Heart left ventricle (tissue), 16 donors: ENCODE measurements at regions of chr2 and their contacts with region 1.

Region 1: DNA sequence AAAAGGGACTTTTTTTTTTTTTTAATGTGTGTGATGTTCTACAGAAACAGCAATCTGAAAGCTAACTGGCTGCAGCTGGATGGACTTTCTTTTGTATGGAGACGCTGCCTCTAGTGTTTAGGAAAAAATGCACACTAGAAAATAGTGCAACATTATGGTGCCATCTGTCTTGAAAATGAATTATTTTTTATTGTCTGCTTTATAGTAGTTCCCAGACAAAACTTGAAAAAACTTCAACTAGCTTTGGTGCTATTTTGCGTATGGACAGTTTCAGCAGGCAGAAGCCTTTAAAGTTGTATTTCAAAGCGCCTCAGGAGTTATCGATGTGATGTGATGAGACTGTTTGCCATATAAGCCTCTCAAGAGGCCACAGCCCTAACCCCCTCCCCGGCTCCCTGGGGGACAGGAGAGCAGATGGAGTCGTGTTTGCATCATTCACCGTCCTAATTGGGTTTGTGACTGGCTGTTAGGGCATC is 86.9 kb downstream of the LTBP1 start:
- DNase-seq: no peak
- ATAC-seq: peak; percentile 53 to 83 (median 72)
- H3K4me3 ChIP-seq: peak overlapping the region in 8 of 12 donors; percentile 9 to 46 (median 35)
- H3K27ac ChIP-seq: peak overlapping the region in 2 of 12 donors; percentile 7 to 69
- H3K4me1 ChIP-seq: peaks cover 0 to 25% (median 5%) of the 10 kb centered on the region in 12 donors
- H3K27me3 ChIP-seq: no peaks in the 10 kb centered on the region
- CTCF ChIP-seq: peak; percentile 30 to 79 (median 68)
- POLR2A ChIP-seq: no peak

Region 2: GRCh38 chr2:32553829-32554432 is 479.7 kb before region 1 on chr2:
- intact Hi-C with region 1: loop called in 4 of 10 experiments (anchors 10 kb)
- DNase-seq: no peak
- ATAC-seq: peak in 3 of 4 donors; percentile 63 to 73 (median 64)
- H3K4me3 ChIP-seq: no peak overlapping the region
- H3K27ac ChIP-seq: no peak overlapping the region
- H3K4me1 ChIP-seq: peaks cover 0 to 5% (median 0%) of the 10 kb centered on the region in 12 donors
- H3K27me3 ChIP-seq: no peaks in the 10 kb centered on the region
- CTCF ChIP-seq: peak; percentile 57 to 81 (median 72)
- POLR2A ChIP-seq: no peak

Region 3: DNA sequence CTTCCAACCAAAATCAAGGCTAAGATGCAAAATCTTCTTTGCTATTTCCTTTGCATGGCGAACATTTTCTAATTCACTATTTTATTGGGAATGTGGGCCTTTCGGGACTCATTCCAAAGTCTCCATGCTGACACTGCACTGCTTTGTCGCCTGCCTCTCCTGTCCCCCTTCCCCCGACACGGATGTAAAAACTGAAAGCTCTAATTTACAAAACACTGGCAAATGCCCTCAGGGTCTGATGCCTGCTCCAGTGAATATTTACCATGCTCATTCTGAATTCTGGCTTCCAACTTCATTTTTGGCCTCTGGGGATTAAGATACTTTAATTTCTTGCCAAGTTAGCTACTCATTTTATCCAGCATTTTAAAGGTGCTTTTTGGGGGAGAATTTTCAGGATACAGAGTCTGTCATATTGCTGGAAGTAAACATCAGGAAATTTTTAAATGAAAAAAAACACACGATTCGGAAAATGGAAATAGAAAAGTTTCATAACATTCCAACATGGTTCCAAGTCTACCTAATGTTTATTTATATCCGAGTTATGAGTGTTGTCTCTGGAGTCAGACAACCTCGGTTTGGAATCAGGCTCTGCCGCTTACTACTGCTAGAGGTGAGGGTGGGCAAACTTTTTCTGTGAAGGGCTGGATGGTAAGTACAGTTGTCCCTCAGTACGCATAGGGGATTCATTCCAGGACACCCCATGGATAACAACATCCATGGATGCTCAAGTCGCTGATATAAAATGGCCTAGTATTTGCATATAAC is 101.5 kb before region 1 on chr2:
- intact Hi-C with region 1: no loop called
- DNase-seq: no peak
- ATAC-seq: peak in 2 of 4 donors; percentile 39 to 68
- H3K4me3 ChIP-seq: no peak overlapping the region
- H3K27ac ChIP-seq: no peak overlapping the region
- H3K4me1 ChIP-seq: peaks cover 0 to 3% (median 0%) of the 10 kb centered on the region in 12 donors
- H3K27me3 ChIP-seq: no peaks in the 10 kb centered on the region
- CTCF ChIP-seq: no peak
- POLR2A ChIP-seq: no peak

Region 4: DNA sequence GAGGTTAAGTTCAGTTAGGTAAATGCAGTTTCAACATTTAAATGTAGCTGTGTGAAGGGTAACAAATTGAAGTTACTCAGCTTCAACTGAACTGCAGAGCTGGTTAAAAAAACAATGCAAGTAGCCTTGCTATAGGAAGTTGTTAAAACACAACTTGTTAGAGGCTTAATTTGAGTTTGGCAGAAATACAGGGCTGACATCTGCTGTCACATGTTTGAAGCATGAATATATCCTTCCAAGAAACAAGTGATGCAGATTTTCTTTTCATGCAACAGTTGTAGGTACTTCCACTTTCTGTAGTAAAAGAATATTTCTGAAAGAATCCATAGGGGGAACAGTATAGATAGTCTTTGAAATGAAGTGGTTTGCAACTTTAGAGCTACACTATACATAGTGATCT is 234.1 kb after region 1 on chr2:
- intact Hi-C with region 1: loop called in 9 of 10 experiments (anchors 5 to 10 kb)
- DNase-seq: no peak
- ATAC-seq: no peak
- H3K4me3 ChIP-seq: no peak overlapping the region
- H3K27ac ChIP-seq: peak overlapping the region in 1 of 12 donors; percentile 48
- H3K4me1 ChIP-seq: peaks cover 0 to 24% (median 9%) of the 10 kb centered on the region in 12 donors
- H3K27me3 ChIP-seq: no peaks in the 10 kb centered on the region
- CTCF ChIP-seq: no peak
- POLR2A ChIP-seq: no peak

Region 5: GRCh38 chr2:33372940-33373553 is 339.4 kb after region 1 on chr2:
- intact Hi-C with region 1: loop called in 5 of 10 experiments (anchors 10 kb)
- DNase-seq: no peak
- ATAC-seq: no peak
- H3K4me3 ChIP-seq: no peak overlapping the region
- H3K27ac ChIP-seq: no peak overlapping the region
- H3K4me1 ChIP-seq: peaks cover 0 to 5% (median 0%) of the 10 kb centered on the region in 12 donors
- H3K27me3 ChIP-seq: no peaks in the 10 kb centered on the region
- CTCF ChIP-seq: peak; percentile 67 to 86 (median 76)
- POLR2A ChIP-seq: no peak

Region 6: GRCh38 chr2:33583194-33583938 is 549.7 kb after region 1 on chr2:
- intact Hi-C with region 1: loop called in 2 of 10 experiments (anchors 10 kb)
- DNase-seq: no peak
- ATAC-seq: peak in 2 of 4 donors; percentile 47 to 48
- H3K4me3 ChIP-seq: no peak overlapping the region
- H3K27ac ChIP-seq: peak overlapping the region in 2 of 12 donors; percentile 28 to 36
- H3K4me1 ChIP-seq: peaks cover 0 to 25% (median 8%) of the 10 kb centered on the region in 12 donors
- H3K27me3 ChIP-seq: no peaks in the 10 kb centered on the region
- CTCF ChIP-seq: peak; percentile 70 to 88 (median 82)
- POLR2A ChIP-seq: no peak